ENCODE measurements at regions of chr17 and their contacts with region 1.

Region 1: GRCh38 chr17:79372470-79373238 is 238.2 kb downstream of the RBFOX3 start:
- DNase-seq: no peak

Region 2: GRCh38 chr17:79306424-79307318 is 66.0 kb before region 1 on chr17:
- intact Hi-C with region 1: no loop called
- DNase-seq: no peak

Region 3: GRCh38 chr17:79332011-79332554 is 40.6 kb before region 1 on chr17:
- intact Hi-C with region 1: loop called in 1 of 2 experiments (anchors 5 kb)
- DNase-seq: no peak

Region 4: DNA sequence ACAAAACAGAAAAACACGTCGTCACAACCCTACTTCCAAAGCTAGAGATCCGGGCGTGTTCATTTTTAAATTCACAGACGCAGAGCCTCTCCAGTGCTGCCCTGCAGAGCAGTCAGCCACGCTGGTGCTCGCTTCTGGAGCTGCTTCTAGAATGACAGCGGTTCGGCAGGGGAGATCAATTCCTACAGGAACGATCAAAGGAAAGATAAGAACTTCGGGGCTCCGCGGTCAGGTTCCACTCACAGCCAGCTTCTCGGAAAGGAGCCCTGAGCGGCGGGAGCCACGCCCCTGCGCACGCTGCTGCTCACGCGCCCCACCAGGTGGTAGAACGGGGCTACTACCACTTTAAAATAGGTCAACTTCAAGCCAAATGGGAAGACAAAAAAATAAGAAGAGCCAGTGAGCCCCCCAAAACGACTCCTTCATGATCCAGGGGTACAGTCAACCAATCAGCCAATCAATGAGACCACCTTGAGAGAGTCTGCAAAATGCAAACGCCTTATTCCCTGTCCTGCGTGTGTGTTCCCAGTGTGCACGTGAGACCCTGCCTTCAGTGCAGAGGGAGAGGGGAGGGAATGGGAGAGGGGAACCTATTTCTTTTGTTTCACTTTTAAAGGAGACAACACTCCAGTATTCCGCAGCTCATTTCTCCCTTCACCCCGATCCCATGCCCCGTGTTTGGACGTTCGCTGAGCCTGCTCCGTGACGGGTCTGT is 28.5 kb after region 1 on chr17:
- intact Hi-C with region 1: loop called in 1 of 2 experiments (anchors 1 kb)
- DNase-seq: peak; percentile 92